ENCODE measurements at regions of chr11 and their contacts with region 1.

Region 1: DNA sequence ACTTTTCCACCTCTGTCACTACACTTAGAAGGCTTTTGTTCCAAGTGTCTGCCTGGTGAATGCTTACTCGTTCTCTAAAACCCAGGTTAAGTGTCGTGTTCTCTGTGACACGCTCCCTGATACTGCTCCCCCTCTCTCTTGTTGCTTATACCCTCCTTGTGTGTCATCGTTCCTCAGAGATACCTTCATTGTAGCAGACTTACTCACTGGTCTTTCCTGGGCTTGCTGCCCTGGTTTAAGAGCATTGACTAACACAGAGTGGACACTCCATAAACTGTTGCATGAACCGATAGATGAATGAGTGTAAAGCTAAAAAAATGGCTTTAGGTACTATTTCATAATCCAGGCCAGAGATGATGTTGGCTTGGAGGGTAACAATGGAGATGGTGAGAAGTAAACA is 171.3 kb downstream of the GRIK4 start:
- DNase-seq: no peak
- H3K4me3 ChIP-seq: no peak overlapping the region
- H3K27ac ChIP-seq: no peak overlapping the region
- H3K4me1 ChIP-seq: no peaks in the 10 kb centered on the region
- H3K27me3 ChIP-seq: peaks cover 0 to 32% (median 0%) of the 10 kb centered on the region in 7 donors
- CTCF ChIP-seq: no peak
- POLR2A ChIP-seq: no peak

Region 2: GRCh38 chr11:120335908-120336640 is 346.8 kb before region 1 on chr11 and contains the start of gene ARHGEF12:
- intact Hi-C with region 1: loop called (anchors 10 kb)
- DNase-seq: peak; percentile 96
- H3K4me3 ChIP-seq: peak within 1 kb of the TSS; percentile 73 to 94 (median 86)
- H3K27ac ChIP-seq: peak within 1 kb of the TSS; percentile 81 to 95 (median 91)
- H3K4me1 ChIP-seq: peaks cover 0 to 68% (median 45%) of the 10 kb centered on the region in 6 donors
- H3K27me3 ChIP-seq: peaks cover 0 to 85% (median 3%) of the 10 kb centered on the region in 7 donors
- CTCF ChIP-seq: peak in 3 of 11 experiments; percentile 4 to 15 (median 15)
- POLR2A ChIP-seq: peak in 1 of 3 donors; percentile 63
- total RNA-seq, gene ARHGEF12: 80.0 to 122 (median 96.0) TPM

Region 3: DNA sequence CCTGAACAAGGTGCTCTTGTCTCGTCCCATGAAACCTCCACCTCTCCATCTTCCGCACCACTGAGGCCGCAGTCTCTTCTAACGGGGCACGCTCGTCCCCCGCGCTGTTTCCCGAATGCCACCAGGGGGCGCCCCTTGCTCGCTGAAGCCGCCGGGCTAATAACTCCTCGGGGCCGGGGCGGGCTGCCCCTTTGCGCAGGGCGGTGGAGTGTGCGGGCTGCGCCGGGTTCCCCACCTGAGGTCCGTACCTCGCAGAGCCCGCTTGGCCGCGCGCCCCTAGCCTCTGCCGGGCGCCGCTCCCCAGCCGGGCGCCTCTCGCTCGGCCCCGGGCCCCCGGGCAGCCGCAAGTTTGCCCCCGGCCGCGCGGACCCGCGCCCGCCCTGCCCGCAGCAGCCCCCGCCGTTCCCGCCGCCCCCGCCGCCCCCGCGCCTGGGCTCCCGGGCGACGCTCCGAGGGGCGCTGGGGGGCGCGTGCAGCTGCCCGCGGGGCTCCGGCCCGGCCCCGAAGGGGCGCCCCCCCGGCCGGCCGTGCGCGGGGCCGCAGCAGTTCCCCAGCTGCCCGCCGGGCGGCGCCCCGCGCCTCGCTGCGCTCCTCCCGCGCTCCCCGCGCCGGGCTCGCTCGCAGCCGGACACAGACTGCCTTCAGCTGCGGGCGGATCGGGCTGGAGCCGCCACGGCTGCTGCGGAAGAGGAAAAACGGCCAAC is 171.6 kb before region 1 on chr11 and contains the start of gene GRIK4:
- intact Hi-C with region 1: loop called (anchors 2 kb)
- DNase-seq: peak; percentile 94
- H3K4me3 ChIP-seq: peak within 1 kb of the TSS in 7 of 8 donors; percentile 20 to 68 (median 34)
- H3K27ac ChIP-seq: no peak within 1 kb of the TSS
- H3K4me1 ChIP-seq: peaks cover 0 to 12% (median 4%) of the 10 kb centered on the region in 6 donors
- H3K27me3 ChIP-seq: peaks cover 0 to 95% (median 24%) of the 10 kb centered on the region in 7 donors
- CTCF ChIP-seq: peak; percentile 83 to 94 (median 91)
- POLR2A ChIP-seq: no peak
- total RNA-seq, gene GRIK4: 0.40 to 2.4 (median 1.7) TPM

Region 4: GRCh38 chr11:120952461-120953434 is 269.9 kb after region 1 on chr11:
- intact Hi-C with region 1: loop called (anchors 10 kb)
- DNase-seq: peak; percentile 84
- H3K4me3 ChIP-seq: peak overlapping the region in 3 of 8 donors; percentile 5 to 55 (median 18)
- H3K27ac ChIP-seq: no peak overlapping the region
- H3K4me1 ChIP-seq: peaks cover 0 to 19% (median 11%) of the 10 kb centered on the region in 6 donors
- H3K27me3 ChIP-seq: peaks cover 0 to 41% (median 0%) of the 10 kb centered on the region in 7 donors
- CTCF ChIP-seq: peak; percentile 59 to 88 (median 75)
- POLR2A ChIP-seq: no peak

Measured in spleen (tissue), 13 donors.